Heart right ventricle (tissue), 16 donors: ENCODE measurements at regions of chr9 and their contacts with region 1.

Region 1: GRCh38 chr9:6049798-6050197 is 34.4 kb upstream of the RANBP6 start:
- DNase-seq: no peak
- ATAC-seq: no peak
- H3K4me3 ChIP-seq: no peak overlapping the region
- H3K27ac ChIP-seq: no peak overlapping the region
- H3K4me1 ChIP-seq: peaks cover 0 to 2% (median 0%) of the 10 kb centered on the region in 9 donors
- H3K27me3 ChIP-seq: peaks cover 0 to 20% (median 4%) of the 10 kb centered on the region in 7 donors
- CTCF ChIP-seq: peak in 2 of 9 donors; percentile 17 to 31

Region 2: DNA sequence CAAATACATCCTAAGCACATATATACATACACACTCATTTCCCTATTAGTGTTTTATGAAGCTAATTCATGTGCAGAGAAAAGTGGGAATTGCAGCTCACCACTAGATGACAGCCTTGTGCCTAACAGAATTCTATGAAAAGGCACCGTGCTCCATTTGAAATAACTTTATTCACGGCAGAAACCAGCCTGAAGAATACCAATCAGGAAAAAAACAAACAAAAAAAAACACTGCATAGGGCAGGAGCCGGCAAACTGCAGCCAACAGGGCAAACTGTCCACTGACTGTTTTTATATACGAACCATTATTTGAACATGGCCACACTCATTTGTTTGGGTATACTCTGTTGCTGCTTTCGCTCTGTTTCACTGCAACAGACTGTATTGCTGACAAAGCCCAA is 250.5 kb before region 1 on chr9:
- intact Hi-C with region 1: loop called in 1 of 10 experiments (anchors 10 kb)
- DNase-seq: no peak
- ATAC-seq: peak in 1 of 8 donors; percentile 47
- H3K4me3 ChIP-seq: no peak overlapping the region
- H3K27ac ChIP-seq: no peak overlapping the region
- H3K4me1 ChIP-seq: peaks cover 0 to 5% (median 0%) of the 10 kb centered on the region in 9 donors
- H3K27me3 ChIP-seq: no peaks in the 10 kb centered on the region
- CTCF ChIP-seq: peak in 7 of 9 donors; percentile 38 to 65 (median 56)

Region 3: DNA sequence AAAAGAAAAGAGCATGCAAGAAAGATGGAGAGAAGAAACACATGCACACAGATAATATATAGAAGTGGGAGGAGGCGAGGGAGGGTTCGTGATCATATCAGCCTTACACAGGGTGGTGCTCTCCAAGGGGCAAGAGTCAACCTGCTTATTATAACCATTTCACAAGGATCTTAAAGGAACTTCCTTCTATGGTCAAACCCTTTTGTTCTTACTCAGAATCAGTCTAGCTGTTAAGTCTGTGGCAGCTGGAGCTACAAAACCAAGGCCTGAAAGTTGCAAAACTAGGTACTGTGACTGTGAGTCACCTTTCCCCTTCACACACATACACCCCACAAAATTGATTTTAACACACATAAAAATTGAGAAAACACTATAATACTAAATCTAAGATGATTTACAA is 198.4 kb before region 1 on chr9:
- intact Hi-C with region 1: no loop called
- DNase-seq: no peak
- ATAC-seq: peak in 1 of 8 donors; percentile 37
- H3K4me3 ChIP-seq: no peak overlapping the region
- H3K27ac ChIP-seq: no peak overlapping the region
- H3K4me1 ChIP-seq: peaks cover 0 to 14% (median 0%) of the 10 kb centered on the region in 9 donors
- H3K27me3 ChIP-seq: no peaks in the 10 kb centered on the region
- CTCF ChIP-seq: no peak

Region 4: DNA sequence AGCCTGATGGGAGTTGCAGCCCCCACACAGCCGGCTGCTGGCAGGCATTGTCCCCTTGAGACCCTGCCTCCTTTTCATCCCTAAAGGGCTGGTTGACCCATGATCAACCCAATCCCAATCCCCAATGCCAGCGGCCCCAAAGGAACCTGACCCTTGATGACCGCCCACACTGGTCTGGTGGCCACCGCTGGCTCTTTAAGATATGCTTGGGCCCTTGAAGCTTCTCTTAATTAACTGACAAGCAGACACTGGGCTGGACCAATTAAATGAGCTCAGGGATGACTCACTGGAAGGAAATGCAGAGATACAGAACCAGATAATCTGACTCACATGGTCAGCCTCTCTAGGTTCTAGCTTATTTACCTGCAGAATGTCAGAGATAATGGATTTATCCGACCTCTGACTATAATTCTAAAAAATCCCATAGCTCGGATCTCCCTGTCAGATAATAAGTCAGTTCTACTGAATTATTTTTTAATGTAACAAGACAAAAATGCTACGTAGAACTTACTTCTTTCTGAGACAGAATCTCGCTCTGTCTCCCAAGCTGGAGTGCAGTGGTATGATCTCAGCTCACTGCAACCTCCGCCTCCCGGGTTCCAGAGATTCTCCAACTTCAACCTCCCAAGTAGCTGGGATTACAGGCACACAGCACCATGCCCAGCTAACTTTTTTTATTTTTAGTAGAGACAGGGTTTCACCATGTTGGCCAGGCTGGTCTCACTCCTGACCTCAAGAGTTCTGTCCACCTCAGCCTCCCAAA is 170.2 kb before region 1 on chr9:
- intact Hi-C with region 1: loop called in 2 of 10 experiments (anchors 5 to 10 kb)
- DNase-seq: no peak
- ATAC-seq: no peak
- H3K4me3 ChIP-seq: no peak overlapping the region
- H3K27ac ChIP-seq: no peak overlapping the region
- H3K4me1 ChIP-seq: no peaks in the 10 kb centered on the region
- H3K27me3 ChIP-seq: no peaks in the 10 kb centered on the region
- CTCF ChIP-seq: no peak

Region 5: GRCh38 chr9:5886114-5886939 is 163.5 kb before region 1 on chr9:
- intact Hi-C with region 1: loop called (anchors 1 to 10 kb)
- DNase-seq: peak; percentile 68
- ATAC-seq: peak; percentile 68 to 90 (median 88)
- H3K4me3 ChIP-seq: no peak overlapping the region
- H3K27ac ChIP-seq: no peak overlapping the region
- H3K4me1 ChIP-seq: no peaks in the 10 kb centered on the region
- H3K27me3 ChIP-seq: no peaks in the 10 kb centered on the region
- CTCF ChIP-seq: peak; percentile 64 to 94 (median 89)

Region 6: DNA sequence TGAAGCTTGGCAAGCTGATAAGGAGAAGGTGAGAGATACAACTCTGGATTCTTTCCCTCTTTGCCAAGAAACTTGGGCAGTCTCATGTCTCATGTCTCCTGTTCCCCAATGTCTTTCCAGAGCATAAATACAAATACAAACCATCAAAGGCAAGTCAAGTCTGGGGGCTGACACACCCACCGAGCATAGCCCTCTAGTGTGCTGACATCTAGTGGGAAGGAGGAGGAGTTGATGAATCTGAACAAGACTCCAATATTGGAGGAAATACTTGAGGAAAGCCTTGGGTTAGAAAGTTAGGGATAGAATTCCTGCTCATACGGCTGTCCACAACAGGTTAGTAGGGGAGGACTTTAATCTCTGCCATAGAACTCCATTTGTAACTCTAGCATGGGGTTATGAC is 150.5 kb before region 1 on chr9:
- intact Hi-C with region 1: loop called in 1 of 10 experiments (anchors 10 kb)
- DNase-seq: no peak
- ATAC-seq: no peak
- H3K4me3 ChIP-seq: no peak overlapping the region
- H3K27ac ChIP-seq: no peak overlapping the region
- H3K4me1 ChIP-seq: peaks cover 0 to 6% (median 0%) of the 10 kb centered on the region in 9 donors
- H3K27me3 ChIP-seq: no peaks in the 10 kb centered on the region
- CTCF ChIP-seq: no peak

Region 7: DNA sequence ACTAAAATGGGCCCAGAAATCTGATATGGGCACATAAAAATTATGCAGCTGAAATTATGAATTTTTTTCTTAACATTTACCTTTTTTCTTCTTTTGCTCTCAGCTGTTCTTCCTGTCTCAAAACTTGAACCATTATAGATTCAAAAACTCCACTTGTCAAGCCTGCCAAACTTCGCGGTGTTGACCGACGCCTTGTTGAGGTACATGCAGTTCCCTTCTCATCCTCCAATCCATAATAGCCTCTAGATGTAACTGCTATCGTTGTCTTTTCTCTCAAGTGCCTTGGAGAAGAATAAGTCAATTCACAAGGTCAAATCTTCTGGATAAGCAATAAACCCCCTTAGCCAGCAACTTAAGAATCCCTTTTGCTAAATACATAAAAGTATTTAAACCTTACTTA is 61.5 kb before region 1 on chr9:
- intact Hi-C with region 1: no loop called
- DNase-seq: no peak
- ATAC-seq: peak in 6 of 8 donors; percentile 38 to 94 (median 63)
- H3K4me3 ChIP-seq: no peak overlapping the region
- H3K27ac ChIP-seq: peak overlapping the region in 3 of 10 donors; percentile 25 to 32 (median 29)
- H3K4me1 ChIP-seq: peaks cover 0 to 13% (median 4%) of the 10 kb centered on the region in 9 donors
- H3K27me3 ChIP-seq: no peaks in the 10 kb centered on the region
- CTCF ChIP-seq: peak in 1 of 9 donors; percentile 14

Region 8: DNA sequence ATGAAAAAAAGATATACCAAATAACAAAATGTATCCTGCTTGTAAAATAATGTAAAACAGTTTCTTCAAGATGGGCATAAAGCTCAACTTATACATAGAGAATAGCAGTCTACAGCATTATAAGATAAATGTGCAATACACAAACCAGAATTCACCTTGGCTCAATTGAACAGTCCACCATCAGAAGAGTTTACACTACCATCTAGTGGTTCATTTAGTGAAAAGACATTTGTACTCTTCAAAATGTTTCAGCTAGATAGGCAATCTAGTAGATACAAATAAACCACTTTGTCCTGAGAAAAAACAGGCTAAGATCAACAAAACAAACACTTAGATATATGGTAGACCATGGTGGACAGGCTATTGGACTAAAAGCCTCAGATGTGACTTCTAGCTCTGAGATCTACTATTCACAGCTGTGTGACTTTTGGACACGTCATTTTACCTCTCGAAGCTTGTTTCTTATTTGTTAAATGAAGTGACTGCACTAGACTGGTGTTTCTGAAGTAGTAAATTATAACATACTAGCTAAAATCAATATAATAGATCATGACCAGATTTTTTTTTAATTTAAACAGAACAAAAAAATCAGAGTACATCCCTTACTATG is 256.3 kb after region 1 on chr9:
- intact Hi-C with region 1: loop called in 8 of 10 experiments (anchors 2 to 10 kb)
- DNase-seq: no peak
- ATAC-seq: peak in 6 of 8 donors; percentile 48 to 79 (median 71)
- H3K4me3 ChIP-seq: no peak overlapping the region
- H3K27ac ChIP-seq: no peak overlapping the region
- H3K4me1 ChIP-seq: no peaks in the 10 kb centered on the region
- H3K27me3 ChIP-seq: peaks cover 0 to 13% (median 2%) of the 10 kb centered on the region in 7 donors
- CTCF ChIP-seq: peak; percentile 28 to 81 (median 70)

Region 9: GRCh38 chr9:8025551-8025950 is 1975.8 kb after region 1 on chr9:
- intact Hi-C with region 1: no loop called
- DNase-seq: no peak
- ATAC-seq: no peak
- H3K4me3 ChIP-seq: no peak overlapping the region
- H3K27ac ChIP-seq: no peak overlapping the region
- H3K4me1 ChIP-seq: no peaks in the 10 kb centered on the region
- H3K27me3 ChIP-seq: no peaks in the 10 kb centered on the region
- CTCF ChIP-seq: no peak